ENCODE measurements at regions of chr4 and their contacts with region 1.

Region 1: GRCh38 chr4:156771171-156771837 is 200.3 kb downstream of the PDGFC start:
- DNase-seq: peak; percentile 98
- H3K4me3 Mint-ChIP-seq: peak overlapping the region; percentile 63
- H3K27ac Mint-ChIP-seq: peak overlapping the region; percentile 52
- H3K4me1 Mint-ChIP-seq: peaks cover 39% of the 10 kb centered on the region
- H3K27me3 Mint-ChIP-seq: no peaks in the 10 kb centered on the region
- CTCF ChIP-seq: no peak

Region 2: GRCh38 chr4:156374069-156374468 is 397.2 kb before region 1 on chr4:
- CTCF ChIA-PET with region 1: no interaction called
- POLR2A ChIA-PET with region 1: no interaction called
- intact Hi-C with region 1: no loop called
- DNase-seq: no peak
- H3K4me3 Mint-ChIP-seq: no peak overlapping the region
- H3K27ac Mint-ChIP-seq: no peak overlapping the region
- H3K4me1 Mint-ChIP-seq: no peaks in the 10 kb centered on the region
- H3K27me3 Mint-ChIP-seq: no peaks in the 10 kb centered on the region
- CTCF ChIP-seq: no peak

Region 3: DNA sequence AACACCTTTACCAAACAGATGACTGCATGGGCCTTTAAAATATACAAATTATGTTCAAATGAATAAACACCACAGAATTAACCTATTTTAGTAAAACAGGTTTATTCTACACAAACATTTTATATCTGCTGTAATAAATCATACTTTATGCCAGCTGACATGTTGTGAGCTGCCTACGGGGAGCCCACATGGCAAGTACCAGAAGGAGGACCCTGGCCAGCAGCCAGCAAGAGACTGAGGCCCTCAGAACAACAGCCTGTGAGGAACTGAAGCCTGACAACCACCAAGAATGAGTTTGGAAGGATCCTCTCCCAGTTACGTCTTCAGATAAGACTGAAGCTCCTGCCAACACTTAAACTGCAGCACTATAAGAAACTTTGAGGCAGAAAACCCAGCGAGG is 176.7 kb before region 1 on chr4:
- CTCF ChIA-PET with region 1: no interaction called
- POLR2A ChIA-PET with region 1: interaction called, 3 read pairs
- intact Hi-C with region 1: loop called (anchors 10 kb)
- DNase-seq: peak; percentile 42
- H3K4me3 Mint-ChIP-seq: no peak overlapping the region
- H3K27ac Mint-ChIP-seq: peak overlapping the region; percentile 67
- H3K4me1 Mint-ChIP-seq: peaks cover 11% of the 10 kb centered on the region
- H3K27me3 Mint-ChIP-seq: no peaks in the 10 kb centered on the region
- CTCF ChIP-seq: no peak

Region 4: GRCh38 chr4:156799121-156799589 is 27.9 kb after region 1 on chr4:
- CTCF ChIA-PET with region 1: interaction called, 3 read pairs
- POLR2A ChIA-PET with region 1: interaction called, 91 read pairs
- intact Hi-C with region 1: no loop called
- DNase-seq: peak; percentile 52
- H3K4me3 Mint-ChIP-seq: no peak overlapping the region
- H3K27ac Mint-ChIP-seq: peak overlapping the region; percentile 65
- H3K4me1 Mint-ChIP-seq: peaks cover 43% of the 10 kb centered on the region
- H3K27me3 Mint-ChIP-seq: no peaks in the 10 kb centered on the region
- CTCF ChIP-seq: no peak

Region 5: DNA sequence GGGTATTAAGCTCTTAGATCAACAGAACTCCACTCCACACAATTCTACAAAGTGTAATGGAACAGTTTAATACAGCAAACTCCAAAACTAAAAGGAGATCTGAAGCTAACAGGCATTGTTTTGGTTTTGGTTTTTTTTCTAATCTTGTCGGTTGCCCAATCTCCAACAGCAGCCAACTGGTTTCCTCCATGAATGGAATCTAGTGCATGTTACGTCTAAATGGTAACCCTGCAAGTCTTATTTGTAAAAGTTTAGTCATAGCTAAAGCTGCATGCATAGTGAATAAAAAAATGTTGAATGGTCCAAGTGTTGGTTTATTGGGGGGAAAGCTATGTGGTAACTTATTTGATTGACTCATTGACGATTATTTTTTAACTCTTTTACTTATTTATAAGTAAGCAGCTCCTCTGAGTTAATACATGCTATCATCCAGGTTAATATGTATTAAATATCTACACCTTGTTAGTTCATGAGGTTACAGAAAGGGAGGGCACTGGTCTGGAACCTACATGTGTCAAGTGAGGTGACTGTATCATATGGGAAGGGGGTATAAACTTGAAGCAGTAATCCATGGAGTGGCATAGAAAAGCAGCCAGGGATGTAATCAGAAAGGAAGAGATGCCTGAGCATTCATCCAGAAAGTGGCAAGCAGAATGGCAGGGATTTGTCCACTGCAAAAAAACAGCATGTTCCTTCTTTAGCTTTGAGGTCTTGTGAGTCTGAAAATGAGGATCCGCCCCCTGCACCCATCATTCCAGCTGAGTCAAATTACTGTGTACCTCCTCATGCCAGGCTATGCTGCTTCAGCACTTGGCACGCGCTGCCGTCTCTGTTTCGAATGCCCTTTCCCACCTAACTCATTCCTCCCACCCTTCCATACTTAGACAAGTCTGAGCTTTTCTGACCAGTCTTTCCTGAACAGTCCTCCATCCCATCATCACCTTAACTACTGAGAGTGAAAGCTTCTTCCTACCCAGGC is 118.6 kb after region 1 on chr4:
- CTCF ChIA-PET with region 1: interaction called, 3 read pairs
- POLR2A ChIA-PET with region 1: interaction called, 12 read pairs
- intact Hi-C with region 1: loop called (anchors 2 kb)
- DNase-seq: peak; percentile 71
- H3K4me3 Mint-ChIP-seq: peak overlapping the region; percentile 2
- H3K27ac Mint-ChIP-seq: peak overlapping the region; percentile 72
- H3K4me1 Mint-ChIP-seq: peaks cover 32% of the 10 kb centered on the region
- H3K27me3 Mint-ChIP-seq: no peaks in the 10 kb centered on the region
- CTCF ChIP-seq: no peak

Region 6: DNA sequence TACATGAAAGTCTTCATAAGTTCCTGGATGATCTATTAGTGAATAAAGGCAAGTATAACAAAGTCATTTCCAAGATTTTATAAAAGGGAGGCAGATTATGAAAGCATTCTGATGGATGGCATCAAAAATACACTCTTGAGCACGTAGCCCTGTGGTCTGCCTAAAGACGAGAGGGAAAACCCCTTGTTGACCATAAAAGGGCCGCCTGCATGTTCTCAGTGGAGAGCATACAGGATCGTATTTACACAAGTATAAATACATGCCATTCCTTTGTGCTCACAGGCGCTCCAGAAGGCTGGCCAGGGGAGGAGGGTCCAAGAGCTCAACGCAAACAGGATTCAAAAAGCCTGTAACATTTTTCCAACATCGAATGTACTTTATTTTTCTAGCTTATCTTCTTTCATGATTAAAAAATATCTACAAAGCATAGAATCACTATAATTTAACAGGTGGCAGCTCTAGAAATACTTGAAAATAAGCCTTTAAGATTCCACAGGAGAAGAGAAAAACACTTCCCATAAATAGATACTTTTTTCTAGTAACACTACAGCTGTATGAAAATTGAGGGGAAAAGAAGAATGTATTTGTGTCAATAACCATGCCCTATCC is 170.7 kb after region 1 on chr4:
- CTCF ChIA-PET with region 1: no interaction called
- POLR2A ChIA-PET with region 1: interaction called, 64 read pairs
- intact Hi-C with region 1: loop called (anchors 2 kb)
- DNase-seq: peak; percentile 77
- H3K4me3 Mint-ChIP-seq: no peak overlapping the region
- H3K27ac Mint-ChIP-seq: peak overlapping the region; percentile 12
- H3K4me1 Mint-ChIP-seq: peaks cover 48% of the 10 kb centered on the region
- H3K27me3 Mint-ChIP-seq: no peaks in the 10 kb centered on the region
- CTCF ChIP-seq: no peak

Region 7: GRCh38 chr4:157045507-157046127 is 274.3 kb after region 1 on chr4:
- CTCF ChIA-PET with region 1: interaction called, 4 read pairs
- POLR2A ChIA-PET with region 1: interaction called, 5 read pairs
- intact Hi-C with region 1: loop called (anchors 5 kb)
- DNase-seq: peak; percentile 84
- H3K4me3 Mint-ChIP-seq: no peak overlapping the region
- H3K27ac Mint-ChIP-seq: peak overlapping the region; percentile 55
- H3K4me1 Mint-ChIP-seq: peaks cover 22% of the 10 kb centered on the region
- H3K27me3 Mint-ChIP-seq: no peaks in the 10 kb centered on the region
- CTCF ChIP-seq: peak; percentile 89

Measured in MCF 10A (cell line).